ENCODE measurements at regions of chr15 and their contacts with region 1.

Region 1: GRCh38 chr15:70097337-70098169 is at the start of gene TLE3:
- DNase-seq: peak; percentile 99
- H3K4me3 ChIP-seq: peak within 1 kb of the TSS; percentile 82
- H3K27ac ChIP-seq: peak within 1 kb of the TSS; percentile 71
- H3K4me1 ChIP-seq: peaks cover 68% of the 10 kb centered on the region
- CTCF ChIP-seq: peak; percentile 71
- total RNA-seq, gene TLE3: 19.7 and 37.9 TPM in 2 replicates

Region 2: DNA sequence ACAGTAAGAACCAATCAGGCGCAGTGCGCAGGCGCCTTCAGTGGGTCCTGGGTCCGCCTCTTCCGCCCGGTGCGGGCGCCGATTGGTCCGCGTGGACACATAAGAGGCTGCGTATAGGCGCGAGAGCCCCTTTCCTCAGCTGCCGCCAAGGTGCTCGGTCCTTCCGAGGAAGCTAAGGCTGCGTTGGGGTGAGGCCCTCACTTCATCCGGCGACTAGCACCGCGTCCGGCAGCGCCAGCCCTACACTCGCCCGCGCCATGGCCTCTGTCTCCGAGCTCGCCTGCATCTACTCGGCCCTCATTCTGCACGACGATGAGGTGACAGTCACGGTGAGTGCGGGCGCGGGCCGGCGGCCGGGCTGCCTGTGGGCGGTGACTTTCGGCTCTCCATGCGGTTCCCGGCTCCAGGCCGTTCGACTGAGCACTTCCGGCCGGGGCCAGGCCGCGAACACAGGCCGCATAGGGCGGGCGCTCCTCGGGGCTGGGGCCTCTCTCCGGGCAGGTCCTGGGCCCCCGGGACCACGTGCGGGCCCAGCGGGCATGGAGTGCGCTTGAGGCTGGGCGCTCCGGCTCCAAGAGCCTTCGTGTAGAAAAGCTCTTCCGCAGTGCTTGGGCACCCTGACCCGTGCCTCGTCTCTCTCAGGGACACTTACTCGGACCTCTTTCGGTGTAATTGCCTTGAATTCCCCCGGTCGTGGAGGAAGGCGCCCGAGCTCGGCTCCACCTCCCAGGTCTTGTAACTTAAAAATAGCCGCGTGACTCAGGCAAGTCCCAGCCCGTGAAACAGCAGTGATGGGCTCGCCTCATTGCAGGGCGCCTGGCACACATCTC is 644.6 kb before region 1 on chr15 and contains the start of gene RPLP1:
- CTCF ChIA-PET with region 1: no interaction called
- POLR2A ChIA-PET with region 1: no interaction called
- intact Hi-C with region 1: loop called (anchors 5 kb)
- DNase-seq: peak; percentile 98
- H3K4me3 ChIP-seq: peak within 1 kb of the TSS; percentile 94
- H3K27ac ChIP-seq: peak within 1 kb of the TSS; percentile 92
- H3K4me1 ChIP-seq: peaks cover 27% of the 10 kb centered on the region
- CTCF ChIP-seq: no peak
- total RNA-seq, gene RPLP1: 469 and 889 TPM in 2 replicates

Region 3: GRCh38 chr15:69735121-69735520 is 362.4 kb before region 1 on chr15:
- CTCF ChIA-PET with region 1: no interaction called
- POLR2A ChIA-PET with region 1: no interaction called
- intact Hi-C with region 1: no loop called
- DNase-seq: no peak
- H3K4me3 ChIP-seq: no peak overlapping the region
- H3K27ac ChIP-seq: no peak overlapping the region
- H3K4me1 ChIP-seq: no peaks in the 10 kb centered on the region
- CTCF ChIP-seq: no peak

Region 4: GRCh38 chr15:69755551-69756310 is 341.8 kb before region 1 on chr15:
- CTCF ChIA-PET with region 1: no interaction called
- POLR2A ChIA-PET with region 1: interaction called, 4 read pairs
- intact Hi-C with region 1: loop called (anchors 1 kb)
- DNase-seq: peak; percentile 62
- H3K4me3 ChIP-seq: peak overlapping the region; percentile 14
- H3K27ac ChIP-seq: peak overlapping the region; percentile 40
- H3K4me1 ChIP-seq: peaks cover 54% of the 10 kb centered on the region
- CTCF ChIP-seq: no peak

Region 5: GRCh38 chr15:69976366-69976994 is 121.1 kb before region 1 on chr15:
- CTCF ChIA-PET with region 1: interaction called, 5 read pairs
- POLR2A ChIA-PET with region 1: interaction called, 4 read pairs
- intact Hi-C with region 1: loop called (anchors 1 kb)
- DNase-seq: peak; percentile 81
- H3K4me3 ChIP-seq: no peak overlapping the region
- H3K27ac ChIP-seq: no peak overlapping the region
- H3K4me1 ChIP-seq: peaks cover 30% of the 10 kb centered on the region
- CTCF ChIP-seq: no peak

Region 6: DNA sequence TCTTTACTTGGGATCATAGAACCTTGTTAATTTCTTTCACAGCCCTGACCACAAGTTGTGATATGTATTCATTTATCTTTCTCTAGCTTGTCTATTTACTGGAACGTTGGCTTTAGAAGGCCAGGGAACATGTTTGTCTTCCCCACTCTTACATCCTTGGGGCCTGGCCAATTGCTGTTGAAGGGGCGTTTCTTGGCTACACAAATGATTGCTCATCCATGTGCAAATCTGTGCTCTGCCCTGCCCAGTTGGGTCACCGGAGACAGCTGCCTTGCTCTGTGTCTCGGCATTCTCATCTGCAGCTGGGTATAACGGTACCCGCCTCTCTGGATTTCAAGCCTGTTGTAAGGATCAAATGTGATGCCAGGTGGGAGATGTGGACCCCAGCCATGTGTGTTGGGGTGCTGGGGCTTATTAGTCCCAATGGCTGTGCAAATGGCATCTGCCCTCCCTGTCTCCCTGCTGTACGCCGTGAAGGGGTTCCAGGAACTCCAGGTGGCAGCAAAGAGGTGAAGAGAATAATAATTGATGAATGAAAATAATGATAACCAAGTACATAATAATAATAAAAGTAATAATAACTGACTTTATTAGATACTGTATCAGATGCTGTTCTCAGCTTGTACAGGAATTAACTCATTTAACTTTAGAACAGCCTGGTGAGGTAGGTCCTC is 24.2 kb after region 1 on chr15:
- CTCF ChIA-PET with region 1: no interaction called
- POLR2A ChIA-PET with region 1: interaction called, 10 read pairs
- intact Hi-C with region 1: no loop called
- DNase-seq: no peak
- H3K4me3 ChIP-seq: no peak overlapping the region
- H3K27ac ChIP-seq: no peak overlapping the region
- H3K4me1 ChIP-seq: no peaks in the 10 kb centered on the region
- CTCF ChIP-seq: peak; percentile 32; the same call in 1 of the 2 replicates

Region 7: DNA sequence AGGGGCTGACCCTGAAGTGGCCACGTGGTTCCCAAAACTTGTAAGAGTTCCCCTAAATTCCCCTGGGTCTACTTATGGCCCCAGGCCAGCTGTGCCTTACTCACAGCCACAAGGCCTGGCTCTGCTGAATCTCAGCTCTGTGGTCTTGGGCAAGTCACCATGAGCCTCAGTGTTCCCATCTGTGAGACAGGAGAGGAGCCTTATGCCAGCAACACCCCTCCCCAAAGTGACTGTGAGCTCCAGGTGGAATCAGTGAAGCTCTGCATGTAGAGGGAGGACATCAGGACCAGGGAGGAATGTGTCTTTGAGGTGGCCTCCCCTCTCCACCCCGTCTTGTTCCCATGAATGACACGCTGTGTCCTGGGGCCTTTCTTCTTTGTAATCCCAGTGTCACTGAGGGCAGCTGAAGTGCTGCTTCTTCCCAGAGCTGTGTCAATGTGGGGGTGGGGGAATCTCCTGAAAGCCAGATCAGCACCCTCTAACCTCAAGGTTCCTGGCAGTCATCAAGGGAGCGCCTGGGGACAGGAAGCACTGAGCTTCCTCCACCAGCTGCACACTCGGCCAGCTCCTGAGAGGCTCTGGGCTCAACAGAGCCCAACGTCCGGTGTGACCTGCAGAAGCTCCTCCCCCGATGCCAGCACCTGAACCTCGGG is 406.9 kb after region 1 on chr15:
- CTCF ChIA-PET with region 1: no interaction called
- POLR2A ChIA-PET with region 1: interaction called, 3 read pairs
- intact Hi-C with region 1: loop called (anchors 5 kb)
- DNase-seq: peak; percentile 93
- H3K4me3 ChIP-seq: peak overlapping the region; percentile 42
- H3K27ac ChIP-seq: peak overlapping the region; percentile 86
- H3K4me1 ChIP-seq: peaks cover 61% of the 10 kb centered on the region
- CTCF ChIP-seq: no peak